GM12878 (cell line): ENCODE measurements at regions of chr1 and their contacts with region 1.

Region 1: GRCh38 chr1:190084552-190084951 is 393.1 kb downstream of the BRINP3 start:
- DNase-seq: no peak
- ATAC-seq: peak; percentile 90
- H3K4me3 ChIP-seq: no peak overlapping the region
- H3K27ac ChIP-seq: no peak overlapping the region
- H3K4me1 ChIP-seq: no peaks in the 10 kb centered on the region
- H3K27me3 ChIP-seq: no peaks in the 10 kb centered on the region
- CTCF ChIP-seq: peak; percentile 20 to 28 (median 21); a peak in 2 of 6 replicates
- EP300 ChIP-seq: no peak
- POLR2A ChIP-seq: no peak
- RAD21 ChIP-seq: no peak

Region 2: GRCh38 chr1:190001187-190001586 is 83.4 kb before region 1 on chr1:
- CTCF ChIA-PET with region 1: no interaction called
- POLR2A ChIA-PET with region 1: no interaction called
- RAD21 ChIA-PET with region 1: no interaction called
- SMC1A ChIA-PET with region 1: no interaction called
- in situ Hi-C with region 1: no loop called
- intact Hi-C with region 1: no loop called
- DNase-seq: no peak
- ATAC-seq: no peak
- H3K4me3 ChIP-seq: no peak overlapping the region
- H3K27ac ChIP-seq: no peak overlapping the region
- H3K4me1 ChIP-seq: no peaks in the 10 kb centered on the region
- H3K27me3 ChIP-seq: no peaks in the 10 kb centered on the region
- CTCF ChIP-seq: no peak
- EP300 ChIP-seq: no peak
- POLR2A ChIP-seq: no peak
- RAD21 ChIP-seq: no peak

Region 3: DNA sequence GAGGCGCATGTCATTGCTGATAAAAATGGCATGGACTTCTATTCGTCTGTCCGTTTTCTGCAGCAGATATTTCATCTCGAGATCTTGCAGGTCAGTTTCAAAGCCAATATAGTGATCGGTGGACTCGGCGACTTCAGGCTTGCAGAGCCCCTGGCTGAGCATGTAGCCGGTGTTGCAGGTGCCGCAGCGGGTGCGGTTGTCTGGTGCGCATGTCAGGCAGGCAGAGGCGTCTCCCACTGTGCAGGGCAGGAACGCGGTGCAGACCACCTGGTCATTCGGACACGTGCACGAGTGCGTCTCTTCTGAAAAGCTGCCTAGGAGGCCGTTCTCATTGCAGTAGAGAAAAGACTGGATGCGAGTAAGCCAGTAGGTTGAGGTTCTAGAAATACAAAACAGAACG is 14.2 kb after region 1 on chr1:
- CTCF ChIA-PET with region 1: interaction called, 13 read pairs
- POLR2A ChIA-PET with region 1: no interaction called
- RAD21 ChIA-PET with region 1: no interaction called
- SMC1A ChIA-PET with region 1: no interaction called
- in situ Hi-C with region 1: no loop called
- intact Hi-C with region 1: no loop called
- DNase-seq: no peak
- ATAC-seq: no peak
- H3K4me3 ChIP-seq: no peak overlapping the region
- H3K27ac ChIP-seq: no peak overlapping the region
- H3K4me1 ChIP-seq: no peaks in the 10 kb centered on the region
- H3K27me3 ChIP-seq: no peaks in the 10 kb centered on the region
- CTCF ChIP-seq: no peak
- EP300 ChIP-seq: no peak
- POLR2A ChIP-seq: no peak
- RAD21 ChIP-seq: no peak